Uterus (tissue), 4 donors: ENCODE measurements at regions of chr20 and their contacts with region 1.

Region 1: DNA sequence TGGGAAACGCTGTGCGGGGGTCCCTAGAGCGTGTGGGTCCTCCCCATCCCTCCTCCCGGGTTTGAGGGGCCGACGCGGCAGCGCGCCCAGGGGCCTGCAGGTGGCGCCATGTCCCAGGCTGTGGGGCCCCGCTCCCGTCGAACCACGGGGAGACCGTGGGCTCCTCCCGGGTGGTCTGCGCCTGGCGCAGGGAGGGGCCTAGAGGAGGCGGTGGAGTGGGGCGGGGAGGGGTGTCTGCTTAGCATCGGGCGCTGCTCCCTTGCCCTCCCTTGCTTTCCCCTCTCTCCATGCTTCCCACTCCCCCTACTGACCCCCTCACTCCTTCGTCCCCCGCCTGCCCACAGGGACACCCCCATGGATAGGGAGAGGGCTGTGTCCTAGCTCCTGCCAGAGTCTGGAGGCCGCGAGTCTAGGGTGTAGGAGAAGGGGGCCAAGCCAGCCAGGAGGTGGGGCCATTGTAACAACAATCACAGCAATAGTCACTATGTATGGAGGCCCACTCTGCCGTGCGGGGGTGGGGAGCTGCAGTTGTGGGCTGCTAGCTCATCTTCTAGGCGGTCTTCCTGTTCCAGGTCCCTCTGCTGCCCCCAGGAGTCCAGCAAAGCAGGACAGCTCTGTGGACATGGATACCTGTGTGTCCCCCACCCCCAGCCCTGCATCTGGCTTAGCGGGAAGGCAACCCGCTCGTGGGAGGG is 51.7 kb downstream of the CHMP4B start:
- DNase-seq: peak; percentile 49 to 62
- H3K4me3 ChIP-seq: no peak overlapping the region
- H3K27ac ChIP-seq: no peak overlapping the region
- H3K4me1 ChIP-seq: peaks cover 0 to 4% of the 10 kb centered on the region in 2 donors
- H3K27me3 ChIP-seq: no peaks in the 10 kb centered on the region
- CTCF ChIP-seq: peak; percentile 60 to 73 (median 64)
- POLR2A ChIP-seq: no peak

Region 2: DNA sequence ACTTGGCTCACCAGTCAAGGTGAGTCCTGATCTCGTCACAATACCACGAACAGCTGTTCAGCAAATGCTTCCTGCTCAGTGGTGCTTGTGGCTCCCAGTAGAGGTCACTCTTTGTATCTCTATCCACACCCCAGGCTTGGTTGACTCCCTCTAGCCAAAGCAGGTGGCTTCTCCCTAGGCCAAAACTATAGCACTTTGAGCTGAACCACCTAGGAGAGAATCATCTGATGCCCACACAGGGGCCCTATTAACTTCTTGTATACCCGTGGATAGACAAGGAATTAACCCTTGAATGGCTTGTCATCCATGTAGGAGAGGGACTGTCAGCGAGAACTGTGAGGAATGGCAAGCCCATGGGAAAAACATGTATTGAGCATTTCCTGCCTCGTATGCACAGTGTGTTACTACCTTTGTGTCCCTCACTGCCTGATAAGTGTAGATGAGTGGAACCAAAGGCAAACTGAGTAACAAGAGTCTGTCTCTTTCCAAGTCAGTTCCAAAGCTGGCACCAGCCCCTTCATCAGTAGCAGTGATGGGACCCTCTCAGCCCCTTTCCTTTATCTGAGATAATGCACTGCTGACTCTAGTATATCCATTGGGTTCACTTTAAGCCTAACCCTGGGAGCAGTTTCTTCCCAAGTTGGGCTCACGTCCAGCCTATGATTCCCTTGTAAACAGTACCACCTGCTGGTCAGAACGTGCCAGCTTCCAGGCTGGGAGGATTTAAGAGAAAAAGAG is 206.7 kb after region 1 on chr20:
- intact Hi-C with region 1: loop called (anchors 10 kb)
- DNase-seq: peak; percentile 80
- H3K4me3 ChIP-seq: no peak overlapping the region
- H3K27ac ChIP-seq: peak overlapping the region in 1 of 2 donors; percentile 13
- H3K4me1 ChIP-seq: peaks cover 8% of the 10 kb centered on the region in 2 donors
- H3K27me3 ChIP-seq: no peaks in the 10 kb centered on the region
- CTCF ChIP-seq: peak; percentile 76 to 95 (median 88)
- POLR2A ChIP-seq: no peak